HEK293T (cell line): ENCODE measurements at regions of chrX and their contacts with region 1.

Region 1: GRCh38 chrX:24054182-24055042 is at the start of gene EIF2S3:
- DNase-seq: peak; percentile 87

Region 2: DNA sequence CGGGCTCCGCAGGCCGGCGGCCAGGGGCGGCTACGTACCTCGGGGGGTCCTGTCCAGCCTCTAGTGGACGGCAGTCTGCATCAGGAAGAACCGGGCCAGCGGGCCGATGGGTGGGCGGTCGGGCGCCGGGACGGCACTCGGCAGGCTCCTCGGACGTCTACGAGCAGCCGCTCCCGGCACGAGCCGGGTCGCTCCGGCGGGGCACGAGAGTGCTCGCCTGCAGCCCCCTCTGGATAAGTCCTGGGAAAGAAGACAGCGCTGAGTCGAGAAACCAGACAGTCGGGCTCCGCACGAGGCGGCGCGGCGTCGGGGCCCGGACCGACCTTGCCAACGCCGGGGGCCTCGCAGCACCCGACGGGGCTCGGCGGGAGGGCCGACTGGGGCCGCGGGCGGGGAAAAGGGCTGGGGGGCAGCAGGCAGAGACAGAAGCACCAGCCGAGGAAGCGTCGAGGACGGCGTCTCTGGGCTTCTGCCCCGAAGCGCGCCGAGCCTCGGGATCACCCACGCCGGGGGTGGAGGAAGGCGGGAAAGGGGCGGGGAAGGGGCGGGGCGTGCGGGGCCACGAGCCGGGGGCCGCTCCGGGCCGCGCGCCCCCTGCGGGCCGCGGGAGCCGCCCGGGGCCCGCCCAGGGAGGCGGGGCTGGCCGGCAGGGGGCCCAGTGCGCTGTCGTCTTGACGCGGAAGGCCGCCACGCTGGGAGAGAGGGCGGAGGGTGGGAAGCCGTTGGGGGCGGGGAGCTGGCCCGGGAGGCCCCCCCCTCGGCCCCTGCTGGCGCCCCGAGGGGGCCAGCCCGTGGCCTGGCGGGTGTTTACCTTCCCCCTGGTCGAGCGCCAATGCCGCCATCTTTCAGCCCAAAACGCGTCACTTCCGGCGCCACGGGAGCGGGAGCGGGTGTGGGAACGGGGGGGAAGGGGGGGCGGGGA is 29.3 kb before region 1 on chrX:
- CTCF ChIA-PET with region 1: interaction called, 11 read pairs
- POLR2A ChIA-PET with region 1: interaction called, 30 read pairs
- DNase-seq: peak; percentile 86

Region 3: GRCh38 chrX:24030597-24030996 is 23.8 kb before region 1 on chrX:
- CTCF ChIA-PET with region 1: interaction called, 11 read pairs
- POLR2A ChIA-PET with region 1: interaction called, 30 read pairs
- DNase-seq: no peak

Region 4: DNA sequence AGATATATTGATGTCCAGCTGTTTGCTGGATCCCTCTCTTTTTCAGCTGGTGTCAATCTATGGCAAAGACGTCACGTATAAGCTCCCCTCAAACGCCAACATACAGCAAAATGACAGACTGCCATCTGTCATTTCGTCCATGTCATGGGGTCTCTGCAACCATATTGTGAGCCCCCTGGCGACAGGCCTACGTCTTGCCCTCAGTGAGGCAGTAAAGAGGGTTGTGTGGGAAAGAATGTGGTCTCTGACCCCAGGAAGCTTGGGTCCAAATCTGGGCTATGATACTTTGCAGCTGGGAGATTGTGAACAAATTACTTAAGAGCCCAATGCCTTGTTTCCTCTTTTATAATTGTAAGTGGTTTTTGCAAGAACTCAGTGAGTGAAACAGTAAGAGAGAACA is 252.0 kb after region 1 on chrX:
- CTCF ChIA-PET with region 1: no interaction called
- POLR2A ChIA-PET with region 1: no interaction called
- DNase-seq: no peak